A549 (cell line): ENCODE measurements at regions of chr12 and their contacts with region 1.

Region 1: DNA sequence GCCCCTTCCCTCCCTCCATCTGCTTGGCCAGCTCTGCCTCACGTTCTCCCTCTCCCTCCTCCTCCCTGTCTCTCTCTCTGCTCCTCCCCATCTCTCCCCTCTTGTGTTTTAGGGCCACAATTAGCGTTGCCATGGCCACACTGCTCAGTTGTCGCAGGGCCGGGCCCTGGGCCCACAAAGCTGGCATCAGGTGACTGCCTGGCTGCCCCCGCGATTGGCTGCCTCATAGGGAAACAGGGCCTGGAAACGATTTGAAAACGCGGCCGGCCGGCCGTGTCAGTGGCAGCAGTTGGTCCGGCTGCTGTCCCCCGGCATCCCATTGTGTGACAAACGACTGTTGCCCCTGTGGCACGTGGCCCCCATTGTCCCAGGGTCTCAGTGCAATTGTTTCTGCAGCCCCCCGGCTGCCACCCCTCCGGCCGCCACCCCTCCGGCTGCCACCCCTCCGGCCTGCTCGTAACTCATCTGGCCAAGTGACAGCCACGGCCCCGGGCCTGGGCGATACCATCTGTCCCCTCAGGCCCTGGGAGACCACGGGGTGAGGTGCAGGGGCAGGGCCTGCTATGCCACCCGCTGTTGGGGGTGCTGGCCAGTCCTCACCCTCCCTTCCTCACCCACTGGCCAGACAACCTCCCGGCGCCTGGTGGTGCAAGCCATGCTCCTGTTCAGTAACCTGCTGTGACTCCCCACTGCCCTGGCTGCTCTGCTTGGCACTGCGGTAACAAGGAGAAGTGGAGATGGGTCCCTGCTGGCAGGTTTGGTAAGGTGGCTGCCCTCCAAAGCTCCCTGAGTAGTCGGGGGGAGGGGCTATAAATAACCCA is 17.4 kb downstream of the FOXN4 start:
- DNase-seq: no peak
- ATAC-seq: peak; percentile 7 to 33; a peak in 3 of 6 replicates
- H3K4me3 ChIP-seq: no peak overlapping the region
- H3K27ac ChIP-seq: no peak overlapping the region
- H3K4me1 ChIP-seq: no peaks in the 10 kb centered on the region
- CTCF ChIP-seq: no peak
- EP300 ChIP-seq: no peak
- POLR2A ChIP-seq: no peak
- RAD21 ChIP-seq: no peak

Region 2: DNA sequence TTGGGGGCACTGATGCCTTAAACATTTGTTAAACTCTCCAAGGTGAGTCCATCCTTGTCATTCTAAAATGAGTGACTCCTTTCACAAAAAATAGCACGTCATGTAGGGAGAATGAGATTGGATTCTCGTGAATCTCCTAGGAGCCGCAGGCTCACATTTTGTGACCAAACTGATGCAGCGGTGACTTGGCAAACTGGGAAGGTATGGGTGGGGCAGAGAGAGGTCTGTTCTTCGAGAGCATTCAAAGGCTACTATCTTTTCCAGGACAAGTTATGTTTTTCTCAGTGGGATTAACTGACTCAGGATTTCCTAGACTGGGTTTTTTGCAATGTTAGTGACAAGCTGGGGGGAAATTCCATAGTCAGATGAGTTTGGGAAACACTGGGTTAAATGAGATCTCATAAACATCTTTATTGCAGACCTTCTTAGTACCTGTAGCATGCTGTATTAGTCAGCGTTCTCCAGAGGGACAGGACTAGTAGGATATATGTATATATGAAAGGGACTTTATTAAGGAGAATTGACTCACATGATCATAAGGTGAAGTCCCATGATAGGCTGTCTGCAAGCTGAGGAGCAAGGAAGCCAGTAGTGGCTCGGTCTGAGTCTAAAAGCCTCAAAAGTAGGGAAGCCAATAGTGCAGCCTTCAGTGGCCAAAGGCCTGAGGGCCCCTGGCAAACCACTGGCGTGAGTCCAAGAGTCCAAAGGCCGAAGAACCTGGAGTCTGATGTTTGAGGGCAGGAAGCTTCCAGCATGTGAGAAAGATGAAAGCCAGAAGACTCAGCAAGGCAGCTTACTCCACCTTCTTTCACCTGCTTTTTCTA is 43.7 kb before region 1 on chr12:
- CTCF ChIA-PET with region 1: no interaction called
- POLR2A ChIA-PET with region 1: no interaction called
- DNase-seq: peak in 1 of 2 experiments; percentile 49
- ATAC-seq: peak; percentile 43 to 70; a peak in 5 of 6 replicates
- H3K4me3 ChIP-seq: no peak overlapping the region
- H3K27ac ChIP-seq: peak overlapping the region; percentile 7 to 44; a peak in 3 of 6 replicates
- H3K4me1 ChIP-seq: peaks cover 15% of the 10 kb centered on the region
- CTCF ChIP-seq: no peak
- EP300 ChIP-seq: no peak
- POLR2A ChIP-seq: no peak
- RAD21 ChIP-seq: no peak

Region 3: GRCh38 chr12:109302358-109302757 is 10.6 kb after region 1 on chr12:
- CTCF ChIA-PET with region 1: interaction called, 15 read pairs
- POLR2A ChIA-PET with region 1: no interaction called
- DNase-seq: peak; percentile 45 to 46
- ATAC-seq: peak; percentile 62 to 75; a peak in 4 of 6 replicates
- H3K4me3 ChIP-seq: no peak overlapping the region
- H3K27ac ChIP-seq: no peak overlapping the region
- H3K4me1 ChIP-seq: no peaks in the 10 kb centered on the region; the same call in 2 of the 3 replicates
- CTCF ChIP-seq: no peak; the same call in 2 of the 3 replicates
- EP300 ChIP-seq: no peak
- POLR2A ChIP-seq: no peak
- RAD21 ChIP-seq: no peak